Activated naive CD4-positive, alpha-beta T cell treated with anti-CD3 and anti-CD28 coated beads for 36 hours (primary cell): ENCODE measurements at regions of chr1 and their contacts with region 1.

Region 1: DNA sequence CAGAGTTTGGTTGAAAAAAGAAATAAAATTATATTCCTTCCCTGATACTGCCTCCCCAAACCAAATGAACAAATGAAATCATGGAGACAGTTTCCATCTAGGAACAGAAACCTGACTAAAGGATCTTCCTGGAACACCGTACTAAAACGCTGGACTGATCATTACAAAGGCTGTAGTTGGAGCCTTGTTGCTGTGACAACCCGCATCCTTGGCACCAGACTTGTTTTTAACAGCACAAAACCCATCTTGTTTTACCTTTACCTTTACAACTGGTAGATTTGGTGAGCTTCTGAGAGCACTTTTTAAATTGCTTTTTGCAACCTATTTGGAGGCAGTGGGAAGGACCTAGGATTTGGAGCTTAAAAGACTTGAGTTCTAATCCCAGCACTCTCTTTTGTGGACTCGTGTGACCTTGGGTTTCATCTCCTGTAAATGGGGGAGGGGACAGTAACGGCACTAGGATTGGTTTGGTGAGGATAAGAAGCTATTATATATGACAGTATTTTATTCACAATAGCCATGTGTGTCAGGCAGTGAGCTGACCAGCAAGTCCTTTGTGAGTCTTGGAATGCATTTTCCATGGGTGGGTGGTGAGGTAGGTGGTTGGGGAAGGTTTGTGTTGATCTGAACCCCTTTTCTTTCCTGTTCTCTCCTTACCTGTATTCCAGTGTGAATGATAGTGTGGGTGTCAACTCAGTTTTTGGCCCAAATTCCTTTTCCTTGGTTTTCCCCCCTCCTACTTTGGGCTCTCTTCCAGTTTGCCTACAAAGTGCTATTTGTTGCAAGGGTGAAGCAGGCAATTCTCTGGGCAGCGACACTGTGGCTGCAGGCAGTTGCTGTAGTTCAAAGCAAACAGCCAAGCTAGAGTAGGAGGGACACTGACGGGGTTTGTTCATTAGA is 12.6 kb downstream of the LRRC8D start:
- DNase-seq: no peak
- H3K4me3 Mint-ChIP-seq: no peak overlapping the region
- H3K27ac Mint-ChIP-seq: no peak overlapping the region
- H3K4me1 Mint-ChIP-seq: peaks cover 5% of the 10 kb centered on the region
- H3K27me3 Mint-ChIP-seq: no peaks in the 10 kb centered on the region

Region 2: GRCh38 chr1:89799495-89799894 is 33.9 kb before region 1 on chr1:
- CTCF ChIA-PET with region 1: no interaction called
- intact Hi-C with region 1: no loop called
- DNase-seq: no peak
- H3K4me3 Mint-ChIP-seq: no peak overlapping the region
- H3K27ac Mint-ChIP-seq: no peak overlapping the region
- H3K4me1 Mint-ChIP-seq: no peaks in the 10 kb centered on the region
- H3K27me3 Mint-ChIP-seq: no peaks in the 10 kb centered on the region

Region 3: DNA sequence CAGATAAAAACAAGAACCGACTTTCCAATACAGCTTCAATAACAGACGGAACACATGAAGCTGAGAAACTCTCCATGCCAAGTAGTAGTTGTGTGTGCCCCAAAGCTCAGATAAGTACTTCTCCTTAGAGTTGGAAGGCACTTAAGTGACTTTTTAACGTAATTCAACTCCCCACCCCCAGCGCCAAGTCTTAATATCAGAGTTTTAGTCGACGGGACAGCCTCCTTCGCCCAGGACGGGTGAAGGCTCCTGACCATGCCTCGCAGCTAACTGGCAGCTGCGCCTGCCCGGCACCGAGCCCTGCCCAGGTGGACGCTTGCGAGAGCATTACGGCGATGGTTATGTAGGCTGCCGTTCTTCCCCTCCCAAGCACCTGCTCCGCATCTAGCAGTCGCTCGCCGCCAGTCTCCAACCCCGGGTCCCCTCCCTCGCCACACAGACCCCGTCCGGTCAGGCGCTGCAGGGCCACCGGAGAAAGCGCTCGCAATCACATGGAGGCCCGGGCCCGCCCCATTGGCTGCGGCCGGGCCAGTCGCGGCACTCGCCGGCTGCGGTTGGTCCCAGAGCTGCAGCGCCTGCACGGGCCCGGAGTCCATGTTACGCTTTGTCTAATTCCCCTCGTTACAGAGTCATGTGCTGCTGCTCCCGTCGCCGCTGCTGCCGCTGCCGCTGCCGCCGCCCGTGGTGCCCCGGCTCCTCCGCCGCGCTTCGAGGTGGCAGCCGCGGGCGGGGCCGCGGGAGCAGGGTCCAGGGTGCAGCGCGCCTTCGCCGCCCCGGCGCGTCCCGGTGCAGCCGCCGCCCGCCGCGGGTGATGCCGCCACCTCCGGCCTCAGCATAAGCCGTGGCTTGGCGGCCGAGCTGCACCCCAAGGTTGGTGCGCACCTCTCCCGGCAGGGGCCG is 12.8 kb before region 1 on chr1 and contains the start of gene LRRC8D:
- CTCF ChIA-PET with region 1: no interaction called
- intact Hi-C with region 1: loop called (anchors 1 kb)
- DNase-seq: peak; percentile 81
- H3K4me3 Mint-ChIP-seq: peak within 1 kb of the TSS; percentile 85
- H3K27ac Mint-ChIP-seq: peak within 1 kb of the TSS; percentile 26
- H3K4me1 Mint-ChIP-seq: peaks cover 34% of the 10 kb centered on the region
- H3K27me3 Mint-ChIP-seq: no peaks in the 10 kb centered on the region
- total RNA-seq, gene LRRC8D: 14.4 to 15.0 TPM

Region 4: DNA sequence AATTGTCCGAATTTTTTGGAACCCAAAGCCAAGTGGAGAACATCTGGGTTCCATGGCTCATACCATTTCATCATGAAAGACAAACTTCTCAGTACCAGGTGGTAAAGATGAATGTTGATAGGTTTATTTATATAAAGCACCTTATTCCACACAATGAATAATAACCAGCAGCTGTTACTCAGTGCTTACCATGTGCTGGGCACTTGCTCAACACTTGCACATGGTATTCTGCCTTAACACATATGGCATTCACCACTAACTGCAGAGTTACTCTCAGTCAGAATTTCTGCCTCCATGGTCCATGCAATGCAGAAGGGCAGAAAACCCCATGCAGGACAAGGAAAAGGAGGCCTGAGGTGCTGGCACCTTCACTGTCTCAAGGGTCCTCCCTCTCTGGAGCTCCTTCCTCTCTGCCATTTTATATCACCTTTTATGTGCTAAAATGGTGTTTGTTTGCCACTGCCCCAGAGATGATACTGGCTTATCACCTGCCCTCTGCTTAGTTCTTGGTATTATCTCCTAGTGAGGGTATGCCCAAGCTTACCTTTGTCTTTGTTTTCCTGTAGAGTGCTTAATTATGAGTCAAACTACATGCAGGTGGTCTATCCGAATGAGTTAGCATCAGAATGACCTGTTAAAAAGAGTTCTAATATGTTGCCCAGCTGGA is 84.8 kb after region 1 on chr1:
- CTCF ChIA-PET with region 1: no interaction called
- intact Hi-C with region 1: no loop called
- DNase-seq: no peak
- H3K4me3 Mint-ChIP-seq: no peak overlapping the region
- H3K27ac Mint-ChIP-seq: no peak overlapping the region
- H3K4me1 Mint-ChIP-seq: peaks cover 8% of the 10 kb centered on the region
- H3K27me3 Mint-ChIP-seq: no peaks in the 10 kb centered on the region

Region 5: DNA sequence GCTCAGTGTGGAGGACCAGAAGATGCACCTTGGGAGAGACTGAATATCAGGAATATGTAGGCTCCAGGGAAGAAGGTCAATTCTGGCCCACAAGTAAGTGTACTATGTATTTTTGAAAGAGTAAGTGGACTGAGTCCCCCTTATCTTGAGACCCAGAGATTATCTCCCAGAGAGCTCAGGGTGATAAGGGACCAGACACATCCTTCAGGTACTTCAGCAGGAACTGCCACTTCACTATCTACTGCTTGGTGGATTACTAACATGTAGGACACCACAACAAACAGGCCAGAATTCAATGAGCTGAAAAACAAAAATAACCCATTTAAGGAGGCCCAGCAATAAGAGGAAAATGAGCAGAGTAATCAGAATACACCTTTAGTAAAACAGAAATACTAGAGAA is 1069.2 kb after region 1 on chr1:
- CTCF ChIA-PET with region 1: no interaction called
- intact Hi-C with region 1: no loop called
- DNase-seq: no peak
- H3K4me3 Mint-ChIP-seq: no peak overlapping the region
- H3K27ac Mint-ChIP-seq: no peak overlapping the region
- H3K4me1 Mint-ChIP-seq: peaks cover 4% of the 10 kb centered on the region
- H3K27me3 Mint-ChIP-seq: no peaks in the 10 kb centered on the region